ENCODE measurements at regions of chr1 and their contacts with region 1.

Region 1: DNA sequence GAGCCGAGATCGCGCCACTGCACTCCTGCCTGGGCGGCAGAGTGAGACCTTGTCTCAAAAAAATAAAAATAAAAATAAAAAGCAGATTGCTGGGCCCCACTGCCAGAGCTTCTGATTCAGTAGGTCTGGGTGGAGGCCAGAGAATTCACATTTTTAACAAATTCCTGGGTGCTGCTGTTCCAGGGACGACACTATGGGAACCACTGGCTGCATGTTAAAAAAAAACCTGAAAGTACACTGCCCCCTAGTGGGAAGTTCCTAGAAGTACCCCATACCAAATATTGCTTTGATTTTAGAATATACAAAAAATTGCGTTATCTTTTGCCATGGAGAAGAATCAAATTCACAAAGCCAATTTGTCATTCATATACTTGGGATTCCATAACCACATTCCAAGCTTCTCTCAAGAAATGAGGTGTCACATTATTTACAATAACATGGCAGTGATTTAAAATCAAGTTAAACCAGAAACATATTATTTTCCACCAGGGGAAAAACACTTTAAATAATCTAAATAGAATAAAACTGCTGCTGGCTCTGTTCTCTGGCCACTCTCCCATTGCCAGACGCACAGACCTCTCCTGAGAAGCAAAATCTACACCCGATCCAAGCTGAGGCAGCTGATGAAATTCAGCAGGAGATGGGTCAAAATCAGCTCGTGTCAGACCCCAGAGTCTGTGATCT is 27.4 kb downstream of the SYF2 start:
- DNase-seq: peak; percentile 84
- H3K4me3 ChIP-seq: no peak overlapping the region
- H3K27ac ChIP-seq: no peak overlapping the region
- H3K4me1 ChIP-seq: 0 out of 2 replicates have a peak, but pooled peaks cover 3% of the 10 kb centered on the region
- H3K27me3 ChIP-seq: no peaks in the 10 kb centered on the region

Region 2: DNA sequence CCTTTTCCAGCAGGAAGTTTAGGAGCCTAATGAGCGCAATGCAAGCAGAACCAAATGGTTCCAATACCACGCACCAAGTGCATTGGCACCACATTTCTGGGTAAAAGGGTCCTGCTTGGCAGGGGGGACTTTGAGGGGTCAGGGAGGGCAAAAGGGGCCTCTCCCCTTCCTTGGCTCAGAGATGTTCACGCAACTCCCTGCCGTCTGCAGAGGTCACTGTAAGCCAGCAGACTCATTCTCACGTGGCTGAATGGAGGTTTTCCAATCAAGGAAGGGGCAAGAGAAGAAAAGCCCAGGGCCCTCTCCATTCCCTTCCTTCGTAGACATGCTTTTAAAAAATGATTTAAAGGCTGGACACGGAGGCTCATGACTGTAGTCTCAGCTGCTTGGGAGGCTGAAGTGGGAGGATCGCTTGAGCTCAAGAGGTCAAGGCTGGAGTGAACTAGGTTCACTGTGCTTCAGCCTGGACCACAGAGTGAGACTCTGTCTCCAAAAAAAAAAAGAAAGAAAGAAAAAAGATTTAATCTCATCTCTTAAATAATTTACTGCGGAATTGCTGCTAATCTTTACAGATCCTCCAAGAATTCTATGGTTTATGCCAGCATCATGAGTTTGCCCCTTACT is 355.2 kb before region 1 on chr1:
- in situ Hi-C with region 1: loop called (anchors 10 kb)
- DNase-seq: peak; percentile 48
- H3K4me3 ChIP-seq: no peak overlapping the region
- H3K27ac ChIP-seq: peak overlapping the region; percentile 51
- H3K4me1 ChIP-seq: peaks cover 10% of the 10 kb centered on the region; the same call in 1 of the 2 replicates
- H3K27me3 ChIP-seq: no peaks in the 10 kb centered on the region

Region 3: GRCh38 chr1:25529518-25530185 is 324.7 kb after region 1 on chr1:
- in situ Hi-C with region 1: no loop called
- DNase-seq: no peak
- H3K4me3 ChIP-seq: no peak overlapping the region
- H3K27ac ChIP-seq: no peak overlapping the region
- H3K4me1 ChIP-seq: no peaks in the 10 kb centered on the region
- H3K27me3 ChIP-seq: peaks cover 7% of the 10 kb centered on the region; the same call in 1 of the 2 replicates

Region 4: DNA sequence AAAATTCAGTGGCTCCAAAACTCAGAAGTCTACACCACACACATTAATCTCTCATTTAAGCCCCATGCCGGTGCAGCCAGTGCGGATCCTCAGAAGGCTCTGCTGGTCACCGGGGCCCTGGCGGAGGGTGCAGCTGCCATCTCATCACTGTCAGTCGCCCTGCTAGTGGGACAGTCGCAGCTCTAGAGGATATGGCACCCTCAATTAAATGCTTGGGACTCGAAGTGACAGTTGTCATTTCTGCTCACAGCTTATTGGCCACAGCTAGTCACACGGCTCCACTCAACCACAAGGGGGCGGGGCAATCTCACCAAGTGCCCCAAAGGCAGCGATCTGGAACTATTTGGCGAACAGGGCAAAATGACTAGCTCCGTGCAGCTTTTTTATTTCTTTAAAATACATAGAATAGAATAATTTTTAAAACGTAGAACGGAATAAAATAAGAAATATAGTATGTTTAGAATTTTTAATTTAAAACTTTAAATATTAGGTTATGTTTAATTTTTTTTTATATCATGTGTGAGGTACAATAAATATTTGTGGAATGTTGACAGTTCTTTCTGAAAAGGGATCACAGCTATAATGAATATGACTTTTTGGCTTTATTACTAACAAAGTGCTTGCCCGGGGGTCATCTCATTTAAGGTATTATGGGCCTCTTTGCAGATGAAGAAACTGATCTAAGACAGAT is 403.7 kb after region 1 on chr1:
- in situ Hi-C with region 1: no loop called
- DNase-seq: peak; percentile 84
- H3K4me3 ChIP-seq: peak overlapping the region; percentile 44
- H3K27ac ChIP-seq: no peak overlapping the region
- H3K4me1 ChIP-seq: no peaks in the 10 kb centered on the region
- H3K27me3 ChIP-seq: peaks cover 37% of the 10 kb centered on the region

Measured in GM23248 (cell line).